Transverse colon (tissue), 4 donors: ENCODE measurements at regions of chr15 and their contacts with region 1.

Region 1: GRCh38 chr15:53203454-53203853 is 413.3 kb upstream of the ONECUT1 start:
- DNase-seq: no peak
- H3K4me3 ChIP-seq: no peak overlapping the region
- H3K27ac ChIP-seq: no peak overlapping the region
- H3K4me1 ChIP-seq: no peaks in the 10 kb centered on the region
- H3K27me3 ChIP-seq: peaks cover 4% of the 10 kb centered on the region
- CTCF ChIP-seq: no peak
- EP300 ChIP-seq: no peak
- POLR2A ChIP-seq: no peak

Region 2: DNA sequence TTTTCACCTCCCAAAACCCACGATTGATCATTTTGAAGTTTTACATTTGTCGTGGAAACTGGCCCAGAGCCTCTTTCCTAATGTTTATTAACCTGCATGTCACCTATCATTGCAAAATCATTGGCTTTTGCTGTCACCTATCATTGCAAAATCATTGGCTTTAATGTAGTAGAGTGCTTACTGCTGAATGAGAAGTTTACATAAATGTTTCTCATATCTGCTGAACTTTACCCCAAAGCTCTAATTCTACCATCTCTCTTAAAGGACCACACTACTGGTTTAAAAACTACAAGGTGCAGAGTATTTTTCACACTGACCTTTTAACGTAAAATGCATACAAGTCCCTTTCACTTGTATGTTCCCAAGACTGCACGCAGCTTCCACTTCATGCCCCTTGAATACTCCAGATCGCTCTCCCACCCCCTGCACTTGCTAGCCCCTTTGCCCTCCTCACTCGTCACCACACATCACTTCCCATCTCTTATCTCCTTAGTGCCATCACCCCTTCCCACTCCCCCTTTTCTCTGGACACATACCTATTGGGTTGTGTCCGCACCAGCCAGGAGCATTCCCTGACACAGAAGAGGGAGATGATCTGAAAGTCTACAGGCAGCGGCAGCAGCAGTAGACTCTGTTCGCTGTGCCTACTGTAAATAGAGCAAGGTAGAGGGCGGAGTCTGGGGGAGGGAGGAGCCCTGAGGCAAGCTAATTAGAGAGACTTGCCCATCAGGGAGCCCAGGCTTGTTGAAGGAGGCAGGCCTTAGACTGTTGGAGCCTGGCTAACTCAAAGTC is 494.1 kb before region 1 on chr15:
- in situ Hi-C with region 1: no loop called
- intact Hi-C with region 1: no loop called
- DNase-seq: peak; percentile 85
- H3K4me3 ChIP-seq: peak overlapping the region in 2 of 4 donors; percentile 1 to 27
- H3K27ac ChIP-seq: peak overlapping the region in 2 of 4 donors; percentile 34 to 52
- H3K4me1 ChIP-seq: peaks cover 0 to 8% (median 7%) of the 10 kb centered on the region in 4 donors
- H3K27me3 ChIP-seq: no peaks in the 10 kb centered on the region
- CTCF ChIP-seq: no peak
- EP300 ChIP-seq: no peak
- POLR2A ChIP-seq: peak; percentile 17

Region 3: DNA sequence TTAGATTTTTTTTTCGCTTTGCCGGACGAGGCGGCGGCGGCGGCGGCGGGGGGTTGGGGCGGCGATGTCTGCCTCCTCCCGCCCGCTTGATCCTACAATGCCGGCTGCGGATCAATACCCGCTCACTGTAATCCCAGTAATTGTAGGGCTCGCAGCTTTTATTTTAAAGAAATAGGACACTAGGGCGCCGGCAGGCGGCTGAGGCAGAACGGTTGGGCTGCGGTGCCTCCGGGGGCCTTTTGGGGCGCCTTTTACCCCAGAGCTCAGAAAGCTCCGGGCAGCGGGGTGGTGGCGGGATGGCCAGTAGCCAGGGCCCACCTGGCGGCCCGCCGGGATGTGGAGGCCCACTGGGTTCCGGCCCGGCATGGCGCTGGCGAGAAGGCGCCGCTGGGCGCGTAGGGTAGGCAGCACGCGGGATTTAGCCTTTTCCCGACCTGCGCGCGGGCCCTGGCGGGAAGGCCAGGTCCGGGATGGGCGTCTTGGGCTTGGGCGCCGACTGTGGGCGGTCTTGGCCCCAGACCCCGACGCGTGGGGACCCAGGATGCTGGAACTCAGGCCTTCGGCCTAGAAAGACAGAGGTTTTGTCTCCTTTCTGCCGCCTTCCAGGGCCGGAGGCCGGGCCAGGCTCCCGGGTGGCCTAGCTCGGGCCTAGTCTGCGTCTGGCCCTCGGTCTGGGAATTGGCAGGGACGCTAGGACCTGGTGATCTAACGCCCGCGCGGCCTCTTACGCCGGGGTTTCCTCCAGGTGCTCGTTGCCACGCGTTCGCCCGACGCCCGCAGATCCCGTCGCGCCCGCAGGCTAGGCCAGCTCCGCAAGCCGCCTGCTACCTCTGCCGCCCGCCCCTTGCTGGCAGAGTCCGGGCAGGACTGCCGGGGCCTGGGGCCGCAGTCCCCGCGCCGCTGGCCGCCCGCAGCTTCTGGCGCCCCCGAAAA is 397.8 kb before region 1 on chr15:
- in situ Hi-C with region 1: loop called in 1 of 4 experiments (anchors 25 kb)
- intact Hi-C with region 1: no loop called
- DNase-seq: no peak
- H3K4me3 ChIP-seq: peak overlapping the region; percentile 7 to 52 (median 23)
- H3K27ac ChIP-seq: no peak overlapping the region
- H3K4me1 ChIP-seq: peaks cover 17 to 32% (median 27%) of the 10 kb centered on the region in 4 donors
- H3K27me3 ChIP-seq: peaks cover 99% of the 10 kb centered on the region
- CTCF ChIP-seq: no peak
- EP300 ChIP-seq: no peak
- POLR2A ChIP-seq: no peak